ENCODE measurements at regions of chr5 and their contacts with region 1.

Region 1: DNA sequence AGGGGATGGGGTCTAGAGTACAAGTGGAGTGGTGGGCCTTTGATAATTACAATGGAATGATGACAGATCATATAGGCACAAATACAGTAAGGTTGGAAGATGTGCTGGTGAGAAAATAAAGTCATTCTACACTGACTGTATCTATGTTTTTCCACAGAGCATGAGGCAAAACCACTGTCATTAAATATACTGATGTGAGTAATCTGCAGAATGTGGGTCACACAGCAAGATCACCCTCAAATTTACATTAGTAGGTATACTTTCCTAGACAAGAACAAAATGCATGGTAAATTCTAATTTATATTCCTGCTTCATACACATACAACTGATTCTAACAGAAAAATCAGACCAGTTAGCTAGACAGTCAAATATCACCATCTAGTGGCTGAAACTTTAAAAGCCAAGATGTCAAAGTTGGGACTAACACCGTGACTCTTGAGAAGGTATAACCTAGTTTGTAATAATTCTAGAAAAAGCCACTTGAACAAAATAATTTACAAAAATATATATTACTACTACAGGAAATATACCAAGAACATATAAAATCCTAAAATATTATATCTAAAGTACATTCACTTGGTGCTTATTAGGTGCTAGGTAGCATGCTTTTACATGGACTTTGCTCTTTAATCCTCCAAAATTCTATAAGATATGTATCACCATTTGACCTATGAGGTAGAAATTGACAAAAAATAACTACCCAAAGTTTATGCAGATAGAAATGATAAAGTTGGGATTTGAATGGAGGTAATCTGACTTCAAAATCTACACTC is 19.5 kb downstream of the TTC33 start:
- H3K4me3 ChIP-seq: no peak overlapping the region
- H3K27ac ChIP-seq: no peak overlapping the region
- H3K4me1 ChIP-seq: no peaks in the 10 kb centered on the region
- CTCF ChIP-seq: peak; percentile 43; the same call in 1 of the 2 replicates

Region 2: DNA sequence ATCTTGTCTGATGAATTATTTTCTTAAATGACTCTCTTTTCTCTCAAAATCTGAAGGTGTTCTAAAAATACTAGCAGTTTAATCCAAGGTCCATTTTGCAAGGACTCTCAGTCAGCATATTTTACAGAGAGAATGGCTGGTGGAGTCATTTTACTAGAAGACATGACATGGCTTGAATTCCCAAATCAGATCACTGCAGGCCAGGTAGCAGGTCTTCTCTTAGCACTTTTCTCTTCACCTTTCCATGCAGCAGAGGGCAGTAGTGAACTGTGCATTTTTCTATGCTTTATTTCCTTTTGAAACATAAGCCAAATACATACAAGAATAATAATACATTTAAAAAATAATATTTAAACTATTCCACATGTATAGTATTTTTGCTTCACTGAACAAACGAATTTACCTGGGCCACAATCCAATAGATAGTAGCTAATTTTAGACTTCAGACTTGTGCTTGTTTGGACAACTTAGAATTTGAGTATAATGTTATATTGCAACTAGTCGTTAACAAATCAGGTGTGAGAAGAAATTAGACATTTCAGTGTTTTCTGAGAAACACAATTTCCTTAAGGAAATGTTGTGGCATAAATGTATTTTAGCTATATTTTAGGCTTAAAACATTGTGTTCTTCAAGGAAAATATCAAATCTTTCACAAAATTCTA is 1022.1 kb before region 1 on chr5:
- CTCF ChIA-PET with region 1: interaction called, 18 read pairs
- POLR2A ChIA-PET with region 1: no interaction called
- H3K4me3 ChIP-seq: no peak overlapping the region
- H3K27ac ChIP-seq: no peak overlapping the region
- H3K4me1 ChIP-seq: no peaks in the 10 kb centered on the region
- CTCF ChIP-seq: no peak

Region 3: GRCh38 chr5:40446910-40447309 is 289.4 kb before region 1 on chr5:
- CTCF ChIA-PET with region 1: no interaction called
- POLR2A ChIA-PET with region 1: no interaction called
- H3K4me3 ChIP-seq: no peak overlapping the region
- H3K27ac ChIP-seq: no peak overlapping the region
- H3K4me1 ChIP-seq: no peaks in the 10 kb centered on the region
- CTCF ChIP-seq: no peak

Region 4: DNA sequence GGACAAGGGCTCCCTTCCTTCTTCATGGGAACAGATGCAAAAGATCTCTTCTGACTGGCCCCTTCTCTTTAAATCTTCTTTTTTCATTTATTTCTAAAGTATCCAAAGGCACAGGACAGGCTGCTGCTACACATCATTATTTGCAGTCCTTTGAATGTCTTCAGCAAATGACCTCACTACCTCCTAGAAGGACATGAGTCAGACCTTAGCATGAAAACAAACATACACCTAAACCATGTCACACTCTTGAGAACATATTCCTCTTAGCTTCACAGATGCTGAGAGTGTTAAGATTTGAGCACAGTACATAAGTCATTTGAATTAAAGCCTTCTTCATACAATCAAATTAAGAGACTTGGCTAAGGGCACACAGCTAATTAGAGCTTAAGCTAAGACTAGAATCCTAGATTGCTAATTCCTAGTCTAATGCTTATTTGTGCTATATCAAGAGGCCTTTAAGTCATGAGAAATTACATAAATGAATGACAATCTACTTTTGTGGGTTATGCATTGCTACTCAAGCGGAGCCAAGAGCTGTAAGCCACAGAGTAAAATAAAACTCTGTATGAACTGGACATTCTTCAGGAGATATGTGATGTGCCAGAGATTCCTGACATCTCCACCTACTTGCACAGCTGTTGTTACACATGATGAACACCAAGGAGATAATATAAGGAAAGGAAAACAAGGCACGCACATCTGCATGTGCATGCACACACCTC is 165.7 kb before region 1 on chr5:
- CTCF ChIA-PET with region 1: no interaction called
- POLR2A ChIA-PET with region 1: no interaction called
- H3K4me3 ChIP-seq: no peak overlapping the region
- H3K27ac ChIP-seq: no peak overlapping the region
- H3K4me1 ChIP-seq: no peaks in the 10 kb centered on the region
- CTCF ChIP-seq: no peak

Region 5: GRCh38 chr5:40655138-40655537 is 81.2 kb before region 1 on chr5:
- CTCF ChIA-PET with region 1: no interaction called
- POLR2A ChIA-PET with region 1: no interaction called
- H3K4me3 ChIP-seq: no peak overlapping the region
- H3K27ac ChIP-seq: no peak overlapping the region
- H3K4me1 ChIP-seq: no peaks in the 10 kb centered on the region
- CTCF ChIP-seq: no peak

Measured in HEK293 (cell line).